ENCODE measurements at regions of chr5 and their contacts with region 1.

Region 1: GRCh38 chr5:179806250-179807222 is at the start of gene MGAT4B:
- DNase-seq: peak in 5 of 10 donors; percentile 54 to 87 (median 76)
- H3K4me3 ChIP-seq: peak within 1 kb of the TSS; percentile 70 to 98 (median 91)
- H3K27ac ChIP-seq: peak within 1 kb of the TSS; percentile 80 to 98 (median 94)
- H3K27me3 ChIP-seq: no peaks in the 10 kb centered on the region
- CTCF ChIP-seq: peak in 3 of 56 donors; percentile 4 to 24 (median 19)
- total RNA-seq, gene MGAT4B: 46.9 to 108 (median 65.7) TPM

Region 2: DNA sequence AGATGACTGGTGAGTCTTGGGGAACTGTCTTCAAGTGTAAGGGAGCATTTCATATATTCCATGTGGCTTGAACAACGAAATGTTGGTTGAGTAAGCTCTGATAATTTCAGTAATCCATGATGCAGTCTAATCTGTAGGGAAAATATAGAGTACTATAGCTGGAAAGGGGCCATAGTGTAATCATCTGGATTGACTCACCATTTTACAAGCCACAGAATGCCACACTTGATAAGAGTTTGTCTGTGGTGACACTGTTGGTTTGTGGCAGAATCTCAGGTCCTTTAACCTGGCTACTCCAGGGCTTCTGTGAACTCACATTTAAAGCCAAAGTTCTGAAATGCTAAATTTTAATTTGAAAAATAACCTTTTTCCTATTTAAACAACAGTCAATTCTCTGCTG is 90.2 kb before region 1 on chr5:
- intact Hi-C with region 1: no loop called
- DNase-seq: no peak
- H3K4me3 ChIP-seq: no peak overlapping the region
- H3K27ac ChIP-seq: no peak overlapping the region
- H3K27me3 ChIP-seq: no peaks in the 10 kb centered on the region
- CTCF ChIP-seq: no peak

Region 3: DNA sequence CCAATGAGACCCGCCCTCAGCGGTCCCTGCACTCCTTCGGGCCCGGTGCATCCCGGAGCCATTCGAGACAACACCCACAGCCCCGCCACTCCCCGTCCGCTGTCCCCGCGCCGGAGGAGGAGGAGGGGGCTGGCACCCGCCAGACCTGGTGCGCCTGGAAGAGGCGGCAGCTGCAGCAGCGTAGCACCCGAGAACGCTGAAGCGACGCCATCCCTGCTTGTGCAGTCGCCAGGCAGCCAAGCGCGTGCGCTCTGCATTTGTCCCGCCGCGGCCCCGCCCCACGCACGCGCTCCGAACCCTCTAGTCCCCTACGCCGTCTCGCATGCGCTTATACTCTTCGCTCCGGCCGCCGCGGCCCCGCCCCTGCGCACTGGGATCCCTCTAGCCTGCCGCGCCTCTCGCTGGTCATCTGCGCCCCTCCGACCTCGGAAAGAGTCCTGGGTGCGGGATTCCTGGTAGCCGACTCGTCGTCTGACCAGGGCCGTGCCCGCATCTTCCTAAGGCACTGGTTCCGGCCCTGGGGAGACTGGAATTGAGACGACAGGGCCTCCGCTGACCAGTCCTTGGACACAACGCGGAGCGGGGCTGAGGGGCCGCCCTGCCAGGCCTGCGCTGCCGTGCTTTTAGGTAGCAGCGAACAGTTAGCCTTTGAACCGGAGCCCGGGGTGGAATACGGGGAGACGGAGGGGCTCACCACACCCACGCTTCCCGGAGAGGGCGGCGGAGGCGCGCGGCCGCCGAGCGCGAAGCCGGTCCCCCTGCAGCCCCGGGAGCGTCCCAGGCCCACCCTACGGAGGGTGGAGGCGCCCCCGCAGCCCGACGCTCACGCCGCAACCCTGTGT is 52.3 kb after region 1 on chr5 and contains the start of gene MRNIP:
- intact Hi-C with region 1: loop called in 1 of 2 experiments (anchors 2 kb)
- DNase-seq: peak; percentile 94 to 99 (median 98)
- H3K4me3 ChIP-seq: peak within 1 kb of the TSS; percentile 61 to 100 (median 95)
- H3K27ac ChIP-seq: peak within 1 kb of the TSS; percentile 79 to 97 (median 91)
- H3K27me3 ChIP-seq: no peaks in the 10 kb centered on the region
- CTCF ChIP-seq: peak in 49 of 56 donors; percentile 23 to 73 (median 49)
- total RNA-seq, gene MRNIP: 44.7 to 119 (median 74.4) TPM

Measured in dorsolateral prefrontal cortex (tissue), 120 donors.